Body of pancreas (tissue), 4 donors: ENCODE measurements at regions of chr14 and their contacts with region 1.

Region 1: GRCh38 chr14:24431569-24432258 is 2.0 kb downstream of the KHNYN start:
- DNase-seq: peak; percentile 92 to 94 (median 93)
- ATAC-seq: peak; percentile 62
- H3K4me3 ChIP-seq: no peak overlapping the region
- H3K27ac ChIP-seq: peak overlapping the region; percentile 33 to 97 (median 93)
- H3K4me1 ChIP-seq: peaks cover 61% of the 10 kb centered on the region
- H3K27me3 ChIP-seq: no peaks in the 10 kb centered on the region
- CTCF ChIP-seq: peak; percentile 87 to 99 (median 95)
- POLR2A ChIP-seq: peak in 1 of 3 donors; percentile 21

Region 2: DNA sequence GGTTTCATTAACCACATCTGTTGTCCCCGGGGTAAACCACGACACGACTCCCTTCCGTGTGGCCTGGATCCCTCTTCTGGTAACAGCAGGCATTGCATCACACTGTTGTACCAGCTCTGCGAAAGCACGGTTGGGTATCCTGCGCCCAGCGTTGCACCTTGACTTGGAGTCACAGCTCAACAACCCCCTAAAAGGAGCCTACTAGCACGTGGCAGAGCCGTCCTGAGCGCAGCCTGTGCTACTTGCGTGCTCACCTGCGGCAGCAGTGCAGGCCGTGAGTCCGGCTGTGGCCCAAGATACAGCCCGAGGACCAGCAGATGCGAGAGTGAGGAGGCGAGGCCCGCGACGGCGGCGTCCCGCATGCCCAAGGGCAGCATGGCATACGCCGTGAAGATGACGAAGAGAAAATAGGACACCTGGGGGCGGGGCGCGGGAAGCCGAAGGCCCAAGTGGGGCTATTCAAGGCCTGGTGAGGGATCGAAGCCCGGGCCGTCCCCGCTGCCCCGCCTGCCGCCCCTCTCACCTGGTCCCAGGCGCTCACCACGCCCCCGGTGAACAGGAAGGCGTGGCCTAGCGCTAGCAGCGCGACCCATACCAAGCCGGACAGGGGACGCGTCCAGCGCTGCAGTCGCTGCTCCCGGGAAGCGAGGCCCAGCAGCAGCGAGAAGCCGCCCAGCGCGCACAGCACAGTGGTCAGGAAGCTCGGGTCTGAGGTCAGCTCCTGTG is 99.3 kb before region 1 on chr14:
- intact Hi-C with region 1: loop called (anchors 10 kb)
- DNase-seq: peak; percentile 78 to 83 (median 82)
- ATAC-seq: peak; percentile 82
- H3K4me3 ChIP-seq: no peak overlapping the region
- H3K27ac ChIP-seq: no peak overlapping the region
- H3K4me1 ChIP-seq: peaks cover 35% of the 10 kb centered on the region
- H3K27me3 ChIP-seq: peaks cover 4 to 5% of the 10 kb centered on the region in 2 donors
- CTCF ChIP-seq: peak; percentile 60 to 88 (median 73)
- POLR2A ChIP-seq: no peak